ENCODE measurements at regions of chr18 and their contacts with region 1.

Region 1: GRCh38 chr18:45255197-45255890 is 359.9 kb upstream of the SLC14A2 start:
- DNase-seq: no peak
- ATAC-seq: peak; percentile 75 to 77
- H3K4me3 ChIP-seq: no peak overlapping the region
- H3K27ac ChIP-seq: peak overlapping the region; percentile 63
- H3K4me1 ChIP-seq: no peaks in the 10 kb centered on the region
- H3K27me3 ChIP-seq: no peaks in the 10 kb centered on the region

Region 2: DNA sequence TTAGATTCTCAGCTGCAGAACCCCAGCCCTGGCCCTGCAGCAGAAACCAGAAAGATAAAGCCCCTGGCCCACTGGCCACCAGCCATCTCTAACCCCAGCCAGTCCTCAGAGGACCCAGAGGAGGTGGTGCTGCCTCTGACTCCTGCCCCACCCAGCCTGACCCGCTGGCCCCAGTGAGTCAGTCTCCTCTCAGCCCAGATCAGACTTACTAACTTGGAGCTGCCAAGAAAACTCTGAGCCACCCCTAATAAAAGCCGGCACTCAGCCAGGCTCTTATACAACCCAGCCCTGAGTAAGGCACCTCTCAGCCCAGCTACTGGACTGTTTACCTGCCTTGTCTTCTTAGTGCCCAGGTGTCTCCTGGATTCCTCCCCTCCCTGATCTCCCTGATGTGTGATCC is 361.9 kb after region 1 on chr18:
- intact Hi-C with region 1: loop called in 1 of 4 experiments (anchors 10 kb)
- DNase-seq: peak; percentile 93 to 95 (median 94)
- ATAC-seq: peak; percentile 93 to 95
- H3K4me3 ChIP-seq: no peak overlapping the region
- H3K27ac ChIP-seq: peak overlapping the region; percentile 84
- H3K4me1 ChIP-seq: peaks cover 6% of the 10 kb centered on the region
- H3K27me3 ChIP-seq: no peaks in the 10 kb centered on the region